GM18951 (cell line): ENCODE measurements at regions of chr5 and their contacts with region 1.

Region 1: GRCh38 chr5:131986161-131986912 is 25.1 kb downstream of the ACSL6 start:
- POLR2A ChIP-seq: no peak

Region 2: DNA sequence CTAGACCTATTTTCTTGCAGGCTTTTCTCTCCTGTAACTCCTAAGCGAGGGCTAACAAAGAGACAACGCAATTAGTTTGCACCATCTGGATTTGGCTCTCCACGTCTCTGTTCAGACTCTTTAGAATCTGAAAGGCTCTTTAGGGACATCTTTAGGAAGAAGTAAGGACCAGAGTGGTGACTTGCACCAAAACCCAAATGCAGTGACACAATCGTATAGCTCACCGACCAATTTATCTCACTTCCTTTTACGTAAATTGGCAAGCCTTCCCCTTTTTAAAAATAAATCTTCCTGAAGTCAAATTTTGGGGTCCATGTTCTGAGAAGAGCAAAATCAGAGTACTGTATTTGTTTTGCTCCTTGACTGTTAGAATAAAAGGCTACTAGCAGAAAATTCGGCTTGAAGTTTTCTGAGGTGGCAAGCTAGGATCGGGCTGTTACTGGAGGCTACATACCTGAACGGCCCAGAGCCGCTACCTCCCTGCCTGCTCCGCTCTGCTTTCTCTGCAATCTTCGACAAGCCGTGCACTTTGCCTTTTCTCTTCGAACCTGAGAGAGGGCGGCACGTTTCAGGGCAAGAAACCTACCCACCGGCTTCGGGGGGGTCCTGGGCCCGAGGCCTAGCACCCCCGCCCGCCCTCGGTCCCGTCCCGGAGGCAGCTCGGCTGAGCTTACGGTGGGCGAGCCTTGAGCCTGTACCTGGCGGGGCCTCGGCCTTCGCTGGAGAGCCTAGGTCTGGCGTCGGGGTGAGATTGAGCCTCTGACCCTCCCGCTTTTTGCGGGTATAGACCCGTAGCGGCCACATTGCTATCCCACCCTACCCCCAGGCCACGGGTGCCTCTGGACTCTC is 41.4 kb before region 1 on chr5:
- in situ Hi-C with region 1: loop called (anchors 5 kb)
- POLR2A ChIP-seq: no peak